Posterior vena cava (tissue), 2 donors: ENCODE measurements at regions of chr3 and their contacts with region 1.

Region 1: GRCh38 chr3:141804787-141805639 is 41.8 kb downstream of the GRK7 start:
- DNase-seq: no peak

Region 2: GRCh38 chr3:141227752-141228151 is 577.3 kb before region 1 on chr3:
- intact Hi-C with region 1: loop called in 1 of 2 experiments (anchors 5 kb)
- DNase-seq: no peak

Region 3: GRCh38 chr3:141955175-141955574 is 150.2 kb after region 1 on chr3:
- intact Hi-C with region 1: no loop called
- DNase-seq: peak; percentile 51

Region 4: DNA sequence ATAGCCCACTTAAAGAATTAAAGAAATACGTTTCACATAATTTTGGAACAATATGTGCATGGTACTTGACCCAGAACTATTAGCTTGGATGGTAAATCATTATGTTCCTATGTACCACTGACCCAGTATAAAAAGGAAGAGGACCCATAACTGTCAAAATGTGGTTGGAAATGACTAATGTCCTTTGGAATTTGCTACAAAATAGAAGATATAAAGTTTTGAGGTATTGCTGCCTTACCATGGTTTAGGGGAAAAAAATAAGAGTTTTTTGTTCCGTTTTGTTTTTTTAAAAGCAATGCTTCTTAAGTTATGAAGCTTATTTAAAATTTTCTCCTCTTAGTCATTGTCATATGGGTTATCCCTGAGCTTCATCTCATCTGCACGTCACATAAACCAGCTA is 360.2 kb after region 1 on chr3:
- intact Hi-C with region 1: no loop called
- DNase-seq: no peak